ENCODE measurements at regions of chr17 and their contacts with region 1.

Region 1: GRCh38 chr17:74212913-74213791 is at the start of gene TTYH2:
- DNase-seq: peak; percentile 93
- total RNA-seq, gene TTYH2: 17.9 TPM

Region 2: GRCh38 chr17:74243013-74243755 is 30.0 kb after region 1 on chr17:
- intact Hi-C with region 1: loop called (anchors 2 kb)
- DNase-seq: peak; percentile 84

Region 3: DNA sequence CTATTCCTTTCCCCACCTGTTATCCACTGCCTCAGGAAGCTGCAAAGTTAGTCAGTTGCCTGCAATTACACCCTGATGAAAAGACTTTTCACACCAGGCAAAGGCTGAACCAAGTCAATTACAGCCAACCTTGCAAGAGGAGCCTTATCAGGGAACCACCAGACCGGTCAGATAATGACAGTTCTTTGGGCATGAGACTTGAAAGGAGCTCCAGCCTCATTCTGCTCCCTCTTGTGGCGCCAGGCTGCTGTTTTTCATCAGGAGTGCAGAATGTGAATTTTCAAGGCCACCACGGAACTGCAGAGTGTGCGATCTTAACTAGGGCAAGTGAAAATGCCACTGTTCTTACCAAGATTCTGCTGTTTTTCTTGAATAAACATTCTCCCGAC is 83.4 kb after region 1 on chr17:
- intact Hi-C with region 1: loop called (anchors 2 kb)
- DNase-seq: no peak

Region 4: GRCh38 chr17:74361230-74362068 is 148.3 kb after region 1 on chr17 and contains the start of gene BTBD17:
- intact Hi-C with region 1: loop called (anchors 5 kb)
- DNase-seq: no peak
- total RNA-seq, gene BTBD17: not detected

Measured in cardiac septum (tissue), 1 donor.